Activated CD8-positive, alpha-beta T cell treated with anti-CD3 and anti-CD28 coated beads, Interleukin-2, amount 10 ng/mL, durations not matched to agents 7 days and 5 days (primary cell): ENCODE measurements at regions of chr6 and their contacts with region 1.

Region 1: DNA sequence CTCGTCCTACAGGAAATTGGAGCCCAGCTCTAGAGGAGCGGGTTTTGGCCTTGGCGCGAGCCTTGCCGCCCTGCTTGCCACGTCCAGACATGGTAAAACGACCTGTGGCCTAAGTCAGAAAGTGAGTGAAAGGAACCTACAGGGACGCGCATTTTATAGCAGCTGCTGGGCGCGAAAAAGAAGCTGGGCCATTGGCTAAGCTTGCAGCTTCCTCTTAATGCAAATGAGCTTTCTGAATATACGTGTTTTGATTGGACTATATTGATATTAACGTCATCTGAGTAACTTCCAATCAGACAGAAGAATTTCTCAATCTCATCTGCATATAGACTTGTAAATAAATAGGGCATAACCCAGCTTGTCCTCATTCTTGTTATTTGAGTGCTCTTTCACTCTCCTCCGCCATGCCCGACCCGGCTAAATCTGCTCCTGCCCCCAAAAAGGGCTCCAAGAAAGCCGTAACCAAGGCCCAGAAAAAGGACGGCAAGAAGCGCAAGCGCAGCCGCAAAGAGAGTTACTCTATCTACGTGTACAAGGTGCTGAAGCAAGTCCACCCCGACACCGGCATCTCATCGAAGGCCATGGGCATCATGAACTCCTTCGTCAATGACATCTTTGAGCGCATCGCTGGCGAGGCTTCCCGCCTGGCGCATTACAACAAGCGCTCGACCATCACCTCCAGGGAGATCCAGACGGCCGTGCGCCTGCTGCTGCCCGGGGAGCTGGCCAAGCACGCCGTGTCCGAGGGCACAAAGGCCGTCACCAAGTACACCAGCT is 18.9 kb downstream of the OR2B2 start:
- DNase-seq: peak; percentile 96
- ATAC-seq: peak; percentile 55
- H3K4me3 Mint-ChIP-seq: no peak overlapping the region
- H3K27ac Mint-ChIP-seq: no peak overlapping the region
- H3K4me1 Mint-ChIP-seq: peaks cover 56% of the 10 kb centered on the region
- H3K27me3 Mint-ChIP-seq: no peaks in the 10 kb centered on the region

Region 2: GRCh38 chr6:26025894-26026832 is 1867.1 kb before region 1 on chr6:
- CTCF ChIA-PET with region 1: no interaction called
- POLR2A ChIA-PET with region 1: interaction called, 51 read pairs
- DNase-seq: peak; percentile 97
- ATAC-seq: peak; percentile 42
- H3K4me3 Mint-ChIP-seq: peak overlapping the region; percentile 86
- H3K27ac Mint-ChIP-seq: peak overlapping the region; percentile 99
- H3K4me1 Mint-ChIP-seq: peaks cover 86% of the 10 kb centered on the region
- H3K27me3 Mint-ChIP-seq: peaks cover 3% of the 10 kb centered on the region

Region 3: DNA sequence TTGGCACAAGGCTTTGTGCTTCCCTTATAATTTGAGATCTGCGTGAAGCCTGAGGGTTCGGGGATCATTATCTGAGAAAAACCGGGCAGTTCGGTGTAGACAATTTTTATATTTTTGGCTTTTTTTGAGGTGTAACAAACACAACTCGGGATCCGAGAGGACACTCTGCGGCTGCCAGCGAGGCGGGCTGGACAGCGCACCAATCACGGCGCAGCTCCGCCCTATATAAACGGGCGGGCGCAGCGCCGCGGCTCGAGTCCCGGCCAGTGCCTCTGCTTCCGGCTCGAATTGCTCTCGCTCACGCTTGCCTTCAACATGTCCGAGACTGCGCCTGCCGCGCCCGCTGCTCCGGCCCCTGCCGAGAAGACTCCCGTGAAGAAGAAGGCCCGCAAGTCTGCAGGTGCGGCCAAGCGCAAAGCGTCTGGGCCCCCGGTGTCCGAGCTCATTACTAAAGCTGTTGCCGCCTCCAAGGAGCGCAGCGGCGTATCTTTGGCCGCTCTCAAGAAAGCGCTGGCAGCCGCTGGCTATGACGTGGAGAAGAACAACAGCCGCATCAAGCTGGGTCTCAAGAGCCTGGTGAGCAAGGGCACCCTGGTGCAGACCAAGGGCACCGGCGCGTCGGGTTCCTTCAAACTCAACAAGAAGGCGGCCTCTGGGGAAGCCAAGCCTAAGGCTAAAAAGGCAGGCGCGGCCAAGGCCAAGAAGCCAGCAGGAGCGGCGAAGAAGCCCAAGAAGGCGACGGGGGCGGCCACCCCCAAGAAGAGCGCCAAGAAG is 1737.0 kb before region 1 on chr6:
- CTCF ChIA-PET with region 1: no interaction called
- POLR2A ChIA-PET with region 1: interaction called, 21 read pairs
- DNase-seq: peak; percentile 91
- ATAC-seq: peak; percentile 55
- H3K4me3 Mint-ChIP-seq: peak overlapping the region; percentile 94
- H3K27ac Mint-ChIP-seq: peak overlapping the region; percentile 99
- H3K4me1 Mint-ChIP-seq: peaks cover 37% of the 10 kb centered on the region
- H3K27me3 Mint-ChIP-seq: peaks cover 8% of the 10 kb centered on the region

Region 4: DNA sequence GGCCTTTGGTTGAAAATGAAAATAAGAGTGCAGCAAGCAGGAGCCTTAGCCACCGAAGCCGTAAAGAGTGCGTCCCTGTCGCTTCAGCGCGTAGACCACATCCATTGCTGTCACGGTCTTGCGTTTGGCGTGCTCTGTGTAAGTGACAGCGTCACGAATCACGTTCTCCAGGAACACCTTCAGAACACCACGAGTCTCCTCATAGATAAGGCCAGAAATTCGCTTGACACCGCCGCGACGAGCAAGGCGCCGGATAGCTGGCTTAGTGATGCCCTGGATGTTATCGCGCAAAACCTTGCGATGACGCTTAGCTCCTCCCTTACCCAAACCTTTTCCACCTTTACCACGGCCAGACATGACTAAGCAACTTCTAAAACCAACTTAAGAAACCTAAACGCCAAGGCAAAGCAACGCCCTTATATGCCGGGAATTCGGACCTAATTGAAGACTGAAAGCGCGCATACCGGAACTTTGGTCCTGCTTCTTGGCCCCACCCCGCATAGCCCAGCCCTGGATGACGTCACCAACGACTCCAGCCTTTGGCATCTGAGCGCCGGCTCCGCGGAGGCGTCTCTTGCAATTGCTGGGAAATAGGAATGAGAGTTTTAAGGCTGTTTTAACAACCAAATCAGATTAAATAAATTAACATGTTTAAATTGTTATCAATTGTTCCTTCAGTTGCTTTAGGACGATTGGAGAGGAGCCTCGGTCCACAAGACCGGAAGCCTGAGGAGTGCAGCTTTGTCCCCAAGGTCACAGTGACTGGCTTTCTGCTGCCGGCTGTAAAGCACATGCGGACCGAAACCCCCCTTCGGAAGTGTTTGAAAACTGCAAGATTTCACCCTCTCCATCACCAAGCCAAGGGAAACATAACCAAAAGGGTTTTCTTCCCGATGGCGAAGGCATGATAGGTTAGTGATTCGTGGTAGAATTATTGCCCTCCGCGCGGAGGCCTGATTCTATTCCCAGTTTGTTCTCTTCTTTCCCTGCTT is 1607.8 kb before region 1 on chr6:
- CTCF ChIA-PET with region 1: no interaction called
- POLR2A ChIA-PET with region 1: interaction called, 10 read pairs
- DNase-seq: peak; percentile 99
- ATAC-seq: peak; percentile 79
- H3K4me3 Mint-ChIP-seq: peak overlapping the region; percentile 93
- H3K27ac Mint-ChIP-seq: peak overlapping the region; percentile 95
- H3K4me1 Mint-ChIP-seq: peaks cover 42% of the 10 kb centered on the region
- H3K27me3 Mint-ChIP-seq: peaks cover 2% of the 10 kb centered on the region

Region 5: GRCh38 chr6:27002447-27002846 is 890.8 kb before region 1 on chr6:
- CTCF ChIA-PET with region 1: no interaction called
- POLR2A ChIA-PET with region 1: no interaction called
- DNase-seq: no peak
- ATAC-seq: no peak
- H3K4me3 Mint-ChIP-seq: no peak overlapping the region
- H3K27ac Mint-ChIP-seq: no peak overlapping the region
- H3K4me1 Mint-ChIP-seq: no peaks in the 10 kb centered on the region
- H3K27me3 Mint-ChIP-seq: peaks cover 3% of the 10 kb centered on the region

Region 6: GRCh38 chr6:27687154-27688013 is 205.9 kb before region 1 on chr6:
- CTCF ChIA-PET with region 1: interaction called, 4 read pairs
- POLR2A ChIA-PET with region 1: interaction called, 10 read pairs
- DNase-seq: peak; percentile 86
- ATAC-seq: peak; percentile 80
- H3K4me3 Mint-ChIP-seq: peak overlapping the region; percentile 85
- H3K27ac Mint-ChIP-seq: peak overlapping the region; percentile 86
- H3K4me1 Mint-ChIP-seq: peaks cover 28% of the 10 kb centered on the region
- H3K27me3 Mint-ChIP-seq: peaks cover 15% of the 10 kb centered on the region

Region 7: GRCh38 chr6:27838058-27838944 is 54.9 kb before region 1 on chr6:
- CTCF ChIA-PET with region 1: interaction called, 43 read pairs
- POLR2A ChIA-PET with region 1: interaction called, 509 read pairs
- DNase-seq: peak; percentile 92
- ATAC-seq: peak; percentile 78
- H3K4me3 Mint-ChIP-seq: no peak overlapping the region
- H3K27ac Mint-ChIP-seq: no peak overlapping the region
- H3K4me1 Mint-ChIP-seq: peaks cover 33% of the 10 kb centered on the region
- H3K27me3 Mint-ChIP-seq: no peaks in the 10 kb centered on the region

Region 8: GRCh38 chr6:27922949-27923348 is 29.7 kb after region 1 on chr6:
- CTCF ChIA-PET with region 1: no interaction called
- POLR2A ChIA-PET with region 1: no interaction called
- DNase-seq: no peak
- ATAC-seq: no peak
- H3K4me3 Mint-ChIP-seq: no peak overlapping the region
- H3K27ac Mint-ChIP-seq: no peak overlapping the region
- H3K4me1 Mint-ChIP-seq: no peaks in the 10 kb centered on the region
- H3K27me3 Mint-ChIP-seq: peaks cover 24% of the 10 kb centered on the region

Region 9: GRCh38 chr6:28136585-28137504 is 243.6 kb after region 1 on chr6:
- CTCF ChIA-PET with region 1: no interaction called
- POLR2A ChIA-PET with region 1: interaction called, 14 read pairs
- DNase-seq: peak; percentile 83
- ATAC-seq: peak; percentile 67
- H3K4me3 Mint-ChIP-seq: peak overlapping the region; percentile 84
- H3K27ac Mint-ChIP-seq: peak overlapping the region; percentile 90
- H3K4me1 Mint-ChIP-seq: peaks cover 61% of the 10 kb centered on the region
- H3K27me3 Mint-ChIP-seq: no peaks in the 10 kb centered on the region